Activated CD4-positive, alpha-beta T cell treated with anti-CD3 and anti-CD28 coated beads, Interleukin-2, amount 10 ng/mL, durations not matched to agents 24 days and 14 days (primary cell): ENCODE measurements at regions of chr6 and their contacts with region 1.

Region 1: GRCh38 chr6:10429638-10430427 is 15.0 kb upstream of the TFAP2A start:
- DNase-seq: peak; percentile 69
- H3K4me3 Mint-ChIP-seq: peak overlapping the region; percentile 6
- H3K27ac Mint-ChIP-seq: no peak overlapping the region
- H3K4me1 Mint-ChIP-seq: peaks cover 15% of the 10 kb centered on the region
- H3K27me3 Mint-ChIP-seq: peaks cover 39% of the 10 kb centered on the region

Region 2: GRCh38 chr6:8983188-8983688 is 1446.6 kb before region 1 on chr6:
- intact Hi-C with region 1: loop called (anchors 1 kb)
- DNase-seq: peak; percentile 86
- H3K4me3 Mint-ChIP-seq: no peak overlapping the region
- H3K27ac Mint-ChIP-seq: no peak overlapping the region
- H3K4me1 Mint-ChIP-seq: no peaks in the 10 kb centered on the region
- H3K27me3 Mint-ChIP-seq: no peaks in the 10 kb centered on the region

Region 3: DNA sequence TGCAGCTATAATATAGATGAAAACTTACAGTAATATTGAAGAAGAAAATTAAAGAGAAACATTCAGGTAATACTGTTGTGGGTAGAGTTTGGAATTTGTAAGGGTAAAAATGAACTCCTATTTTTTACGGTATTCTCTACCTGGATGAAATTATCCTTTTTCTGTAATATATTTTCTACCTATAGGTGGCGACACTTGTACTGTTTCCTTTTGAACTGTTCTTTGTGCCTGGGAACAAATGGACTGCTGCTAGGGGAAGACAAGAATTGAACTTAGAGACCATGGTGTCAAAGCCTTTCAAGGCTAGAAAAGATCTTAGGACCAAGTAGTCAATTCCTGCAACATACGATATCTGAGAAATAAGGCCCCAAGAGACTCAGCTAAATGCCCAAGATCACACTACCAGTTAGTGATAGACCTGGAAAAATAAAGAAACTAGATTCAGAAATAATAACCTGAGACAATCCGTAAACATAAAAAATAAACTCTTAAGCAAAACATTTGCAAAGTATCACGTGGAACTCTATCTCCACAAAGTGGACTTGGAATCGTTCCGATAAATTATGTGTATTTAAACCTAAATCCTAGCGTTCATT is 398.8 kb before region 1 on chr6:
- intact Hi-C with region 1: loop called (anchors 5 kb)
- DNase-seq: no peak
- H3K4me3 Mint-ChIP-seq: no peak overlapping the region
- H3K27ac Mint-ChIP-seq: no peak overlapping the region
- H3K4me1 Mint-ChIP-seq: no peaks in the 10 kb centered on the region
- H3K27me3 Mint-ChIP-seq: no peaks in the 10 kb centered on the region

Region 4: DNA sequence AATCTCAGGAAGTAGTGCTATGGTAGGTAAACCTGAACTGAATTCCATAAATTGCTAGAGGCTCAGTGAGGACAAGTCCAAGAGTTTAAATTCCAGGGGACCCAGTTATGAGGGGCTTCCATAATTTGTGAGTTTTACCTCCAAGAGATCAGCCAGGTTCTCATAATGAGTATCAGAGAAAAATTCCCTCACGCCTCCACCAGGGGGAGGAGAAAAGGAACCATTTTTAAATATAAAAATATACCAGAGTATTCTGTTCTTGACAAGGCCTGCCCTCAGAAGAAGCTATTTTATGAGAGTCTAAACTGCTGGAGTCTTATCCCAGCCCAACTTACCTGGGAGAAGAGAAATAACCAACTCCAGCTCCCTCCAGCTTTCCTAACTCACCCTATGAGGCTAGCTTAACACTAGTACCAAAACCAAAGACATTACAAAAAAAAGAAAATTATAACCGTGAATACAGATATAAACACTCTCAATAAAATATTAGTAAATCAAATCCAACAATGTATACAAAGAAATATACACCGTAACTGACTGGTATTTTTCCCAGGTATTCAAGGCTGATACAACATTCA is 173.6 kb before region 1 on chr6:
- intact Hi-C with region 1: loop called (anchors 5 kb)
- DNase-seq: peak; percentile 53
- H3K4me3 Mint-ChIP-seq: no peak overlapping the region
- H3K27ac Mint-ChIP-seq: no peak overlapping the region
- H3K4me1 Mint-ChIP-seq: no peaks in the 10 kb centered on the region
- H3K27me3 Mint-ChIP-seq: no peaks in the 10 kb centered on the region

Region 5: GRCh38 chr6:10310826-10311225 is 119.0 kb before region 1 on chr6:
- intact Hi-C with region 1: no loop called
- DNase-seq: no peak
- H3K4me3 Mint-ChIP-seq: no peak overlapping the region
- H3K27ac Mint-ChIP-seq: no peak overlapping the region
- H3K4me1 Mint-ChIP-seq: no peaks in the 10 kb centered on the region
- H3K27me3 Mint-ChIP-seq: no peaks in the 10 kb centered on the region

Region 6: DNA sequence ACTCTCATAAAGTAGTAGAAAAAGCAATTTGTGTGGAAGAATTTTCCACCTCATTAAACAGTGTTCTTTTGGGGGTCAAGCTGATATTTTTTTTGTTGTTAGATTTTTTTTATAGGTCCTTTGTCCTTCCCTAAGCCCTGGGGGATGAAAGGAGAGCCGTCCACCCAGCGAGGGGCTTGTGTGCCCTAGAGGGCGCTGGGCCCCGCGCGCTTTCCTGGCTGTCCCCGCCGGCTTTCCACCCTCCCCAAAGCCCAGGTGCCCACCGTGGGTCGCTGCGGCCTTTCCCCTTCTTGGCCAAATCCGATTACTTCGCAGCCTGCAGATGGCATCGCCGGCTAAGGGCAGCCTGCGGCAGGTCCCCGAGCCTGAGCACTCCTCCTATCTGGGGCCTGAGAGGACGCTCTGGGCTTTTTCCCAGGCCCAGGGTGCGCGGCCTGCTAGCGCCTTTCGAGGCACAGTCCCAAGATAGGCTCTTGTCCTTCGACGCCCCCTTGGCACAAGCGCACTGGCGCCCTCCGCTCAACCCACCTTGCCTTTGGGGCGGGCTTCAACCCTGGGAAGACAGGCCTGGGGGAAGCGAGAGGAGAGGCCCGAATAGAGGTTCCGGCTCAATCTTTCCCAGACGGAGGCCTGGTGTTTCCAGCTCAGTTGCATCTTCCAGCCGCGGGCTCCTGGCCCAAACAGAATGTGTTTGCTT is 48.6 kb before region 1 on chr6:
- intact Hi-C with region 1: loop called (anchors 2 kb)
- DNase-seq: no peak
- H3K4me3 Mint-ChIP-seq: no peak overlapping the region
- H3K27ac Mint-ChIP-seq: no peak overlapping the region
- H3K4me1 Mint-ChIP-seq: peaks cover 4% of the 10 kb centered on the region
- H3K27me3 Mint-ChIP-seq: peaks cover 56% of the 10 kb centered on the region

Region 7: GRCh38 chr6:10411971-10412745 is 17.7 kb before region 1 on chr6:
- intact Hi-C with region 1: loop called (anchors 2 kb)
- DNase-seq: peak; percentile 86
- H3K4me3 Mint-ChIP-seq: peak overlapping the region; percentile 92
- H3K27ac Mint-ChIP-seq: peak overlapping the region; percentile 76
- H3K4me1 Mint-ChIP-seq: peaks cover 31% of the 10 kb centered on the region
- H3K27me3 Mint-ChIP-seq: peaks cover 89% of the 10 kb centered on the region